ENCODE measurements at regions of chr11 and their contacts with region 1.

Region 1: GRCh38 chr11:6682936-6683861 is at the start of gene MRPL17:
- DNase-seq: peak; percentile 96 to 100 (median 99)
- ATAC-seq: peak; percentile 94
- H3K4me3 ChIP-seq: peak within 1 kb of the TSS; percentile 75
- H3K4me3 Mint-ChIP-seq: peak within 1 kb of the TSS; percentile 98
- H3K27ac ChIP-seq: peak within 1 kb of the TSS; percentile 76 to 86
- H3K27ac Mint-ChIP-seq: peak within 1 kb of the TSS; percentile 94
- H3K4me1 ChIP-seq: peaks cover 17% of the 10 kb centered on the region
- H3K4me1 Mint-ChIP-seq: peaks cover 43% of the 10 kb centered on the region
- H3K27me3 ChIP-seq: no peaks in the 10 kb centered on the region
- H3K27me3 Mint-ChIP-seq: no peaks in the 10 kb centered on the region
- CTCF ChIP-seq: peak; percentile 78
- total RNA-seq, gene MRPL17: 12.3 to 14.2 TPM

Region 2: DNA sequence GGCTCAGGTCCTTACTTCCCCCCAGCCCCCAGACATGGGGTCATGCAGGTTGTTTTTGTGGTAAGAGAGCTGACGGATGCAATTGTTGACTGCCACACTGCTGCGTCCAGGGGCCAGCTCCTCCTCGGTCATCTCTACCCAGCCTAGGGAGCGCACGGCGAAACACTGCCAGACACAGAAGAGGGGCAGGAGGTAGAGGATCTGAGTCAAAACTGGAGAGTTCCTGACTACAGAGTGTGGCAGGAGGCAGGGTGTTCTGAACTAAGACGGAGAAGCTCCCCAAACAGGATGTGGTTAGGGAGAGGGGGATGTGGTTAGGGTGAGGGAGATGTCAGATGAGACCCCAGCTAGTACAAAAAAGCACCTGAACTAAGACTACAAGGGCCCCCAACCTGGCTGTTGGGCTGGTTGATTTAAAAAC is 280.6 kb before region 1 on chr11:
- CTCF ChIA-PET with region 1: interaction called, 3 read pairs
- POLR2A ChIA-PET with region 1: interaction called, 12 read pairs
- intact Hi-C with region 1: no loop called
- DNase-seq: peak; percentile 43 to 95 (median 72)
- ATAC-seq: peak; percentile 78
- H3K4me3 ChIP-seq: peak overlapping the region; percentile 31
- H3K4me3 Mint-ChIP-seq: peak overlapping the region; percentile 84
- H3K27ac ChIP-seq: peak overlapping the region; percentile 75 to 91
- H3K27ac Mint-ChIP-seq: peak overlapping the region; percentile 97
- H3K4me1 ChIP-seq: peaks cover 83% of the 10 kb centered on the region
- H3K4me1 Mint-ChIP-seq: peaks cover 96% of the 10 kb centered on the region
- H3K27me3 ChIP-seq: no peaks in the 10 kb centered on the region
- H3K27me3 Mint-ChIP-seq: no peaks in the 10 kb centered on the region
- CTCF ChIP-seq: no peak

Region 3: GRCh38 chr11:6531267-6531752 is 151.9 kb before region 1 on chr11:
- CTCF ChIA-PET with region 1: interaction called, 13 read pairs
- POLR2A ChIA-PET with region 1: interaction called, 8 read pairs
- intact Hi-C with region 1: loop called (anchors 1 to 5 kb)
- DNase-seq: peak in 4 of 14 experiments; percentile 36 to 70 (median 64)
- ATAC-seq: peak; percentile 79
- H3K4me3 ChIP-seq: no peak overlapping the region
- H3K4me3 Mint-ChIP-seq: no peak overlapping the region
- H3K27ac ChIP-seq: no peak overlapping the region
- H3K27ac Mint-ChIP-seq: no peak overlapping the region
- H3K4me1 ChIP-seq: peaks cover 4% of the 10 kb centered on the region
- H3K4me1 Mint-ChIP-seq: peaks cover 14% of the 10 kb centered on the region
- H3K27me3 ChIP-seq: no peaks in the 10 kb centered on the region
- H3K27me3 Mint-ChIP-seq: no peaks in the 10 kb centered on the region
- CTCF ChIP-seq: peak; percentile 79

Region 4: GRCh38 chr11:6612213-6613041 is 70.8 kb before region 1 on chr11 and contains the start of gene TAF10:
- CTCF ChIA-PET with region 1: interaction called, 30 read pairs
- POLR2A ChIA-PET with region 1: interaction called, 134 read pairs
- intact Hi-C with region 1: loop called (anchors 1 to 2 kb)
- DNase-seq: peak; percentile 88 to 98 (median 95)
- ATAC-seq: peak; percentile 86
- H3K4me3 ChIP-seq: peak within 1 kb of the TSS; percentile 90
- H3K4me3 Mint-ChIP-seq: peak within 1 kb of the TSS; percentile 92
- H3K27ac ChIP-seq: peak within 1 kb of the TSS; percentile 96 to 98
- H3K27ac Mint-ChIP-seq: no peak within 1 kb of the TSS
- H3K4me1 ChIP-seq: peaks cover 63% of the 10 kb centered on the region
- H3K4me1 Mint-ChIP-seq: peaks cover 35% of the 10 kb centered on the region
- H3K27me3 ChIP-seq: no peaks in the 10 kb centered on the region
- H3K27me3 Mint-ChIP-seq: no peaks in the 10 kb centered on the region
- CTCF ChIP-seq: peak; percentile 47
- total RNA-seq, gene TAF10: 154 to 164 TPM

Region 5: GRCh38 chr11:6646918-6647679 is 36.1 kb before region 1 on chr11:
- CTCF ChIA-PET with region 1: interaction called, 12 read pairs
- POLR2A ChIA-PET with region 1: interaction called, 32 read pairs
- intact Hi-C with region 1: no loop called
- DNase-seq: peak in 9 of 14 experiments; percentile 18 to 64 (median 42)
- ATAC-seq: peak; percentile 70
- H3K4me3 ChIP-seq: peak overlapping the region; percentile 22
- H3K4me3 Mint-ChIP-seq: no peak overlapping the region
- H3K27ac ChIP-seq: peak overlapping the region; percentile 72 to 76
- H3K27ac Mint-ChIP-seq: no peak overlapping the region
- H3K4me1 ChIP-seq: peaks cover 52% of the 10 kb centered on the region
- H3K4me1 Mint-ChIP-seq: no peaks in the 10 kb centered on the region
- H3K27me3 ChIP-seq: no peaks in the 10 kb centered on the region
- H3K27me3 Mint-ChIP-seq: no peaks in the 10 kb centered on the region
- CTCF ChIP-seq: no peak

Region 6: DNA sequence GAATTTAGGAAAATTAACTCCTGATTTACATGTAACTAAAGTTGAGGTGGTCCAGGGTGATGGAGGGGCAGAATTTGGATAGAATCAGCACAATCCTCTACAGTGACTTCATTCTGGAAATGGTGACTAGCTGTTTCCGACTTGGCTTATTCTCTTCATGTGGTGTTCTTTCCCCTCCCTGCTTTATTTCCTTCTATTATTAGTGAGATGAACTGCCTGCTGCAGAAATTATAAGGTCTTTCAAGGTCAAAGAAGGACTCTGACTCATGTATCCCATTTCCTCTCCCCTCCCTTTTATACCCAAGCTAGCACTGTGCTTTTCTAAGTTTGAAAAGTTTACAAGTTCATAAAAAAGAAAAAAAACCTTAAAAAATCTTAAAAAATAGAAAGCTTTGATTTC is 12.2 kb after region 1 on chr11:
- CTCF ChIA-PET with region 1: interaction called, 10 read pairs
- POLR2A ChIA-PET with region 1: interaction called, 3 read pairs
- intact Hi-C with region 1: no loop called
- DNase-seq: peak in 1 of 14 experiments; percentile 45
- ATAC-seq: peak; percentile 44
- H3K4me3 ChIP-seq: no peak overlapping the region
- H3K4me3 Mint-ChIP-seq: no peak overlapping the region
- H3K27ac ChIP-seq: no peak overlapping the region
- H3K27ac Mint-ChIP-seq: peak overlapping the region; percentile 58
- H3K4me1 ChIP-seq: peaks cover 9% of the 10 kb centered on the region
- H3K4me1 Mint-ChIP-seq: peaks cover 38% of the 10 kb centered on the region
- H3K27me3 ChIP-seq: no peaks in the 10 kb centered on the region
- H3K27me3 Mint-ChIP-seq: no peaks in the 10 kb centered on the region
- CTCF ChIP-seq: no peak

Region 7: DNA sequence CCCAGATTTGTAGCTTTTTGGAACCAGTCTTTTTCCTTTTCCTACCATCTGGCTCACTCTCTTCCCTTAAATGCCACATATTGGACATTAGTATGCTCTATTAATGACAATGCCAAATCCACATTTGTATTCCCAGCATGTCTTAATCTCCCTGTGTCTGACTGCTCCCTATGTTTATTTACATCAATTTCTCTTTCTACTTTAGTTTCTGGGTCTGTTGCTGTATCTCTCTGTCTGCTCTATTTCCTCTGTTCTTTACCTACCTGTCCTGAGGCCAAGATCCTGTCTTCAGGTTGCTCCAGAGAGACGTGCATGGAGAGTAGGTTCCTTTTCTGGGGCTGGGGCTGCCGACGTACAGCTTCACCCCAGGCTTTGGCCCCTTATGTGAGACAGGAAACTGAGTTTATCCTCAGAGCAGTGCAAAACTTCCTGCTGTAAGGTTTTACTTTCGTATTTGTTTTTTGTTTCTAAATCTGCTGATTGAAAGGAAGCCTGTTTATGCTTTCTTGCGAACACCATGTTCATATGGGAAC is 63.0 kb after region 1 on chr11:
- CTCF ChIA-PET with region 1: interaction called, 12 read pairs
- POLR2A ChIA-PET with region 1: interaction called, 20 read pairs
- intact Hi-C with region 1: no loop called
- DNase-seq: peak in 13 of 14 experiments; percentile 19 to 84 (median 45)
- ATAC-seq: peak; percentile 81
- H3K4me3 ChIP-seq: peak overlapping the region; percentile 69
- H3K4me3 Mint-ChIP-seq: no peak overlapping the region
- H3K27ac ChIP-seq: peak overlapping the region; percentile 84 to 93
- H3K27ac Mint-ChIP-seq: no peak overlapping the region
- H3K4me1 ChIP-seq: peaks cover 17% of the 10 kb centered on the region
- H3K4me1 Mint-ChIP-seq: peaks cover 40% of the 10 kb centered on the region
- H3K27me3 ChIP-seq: no peaks in the 10 kb centered on the region
- H3K27me3 Mint-ChIP-seq: no peaks in the 10 kb centered on the region
- CTCF ChIP-seq: no peak

Measured in CD4-positive, alpha-beta T cell (primary cell).